ENCODE measurements at regions of chr1 and their contacts with region 1.

Region 1: GRCh38 chr1:75991497-75992114 is 59.4 kb upstream of the ASB17 start:
- DNase-seq: peak; percentile 13 to 87
- H3K4me3 ChIP-seq: no peak overlapping the region
- H3K27ac ChIP-seq: no peak overlapping the region
- H3K4me1 ChIP-seq: no peaks in the 10 kb centered on the region; a peak in 1 of 7 replicates
- H3K27me3 ChIP-seq: no peaks in the 10 kb centered on the region
- CTCF ChIP-seq: peak; percentile 42 to 87 (median 77)
- EP300 ChIP-seq: no peak
- POLR2A ChIP-seq: no peak
- RAD21 ChIP-seq: peak; percentile 90 to 91

Region 2: DNA sequence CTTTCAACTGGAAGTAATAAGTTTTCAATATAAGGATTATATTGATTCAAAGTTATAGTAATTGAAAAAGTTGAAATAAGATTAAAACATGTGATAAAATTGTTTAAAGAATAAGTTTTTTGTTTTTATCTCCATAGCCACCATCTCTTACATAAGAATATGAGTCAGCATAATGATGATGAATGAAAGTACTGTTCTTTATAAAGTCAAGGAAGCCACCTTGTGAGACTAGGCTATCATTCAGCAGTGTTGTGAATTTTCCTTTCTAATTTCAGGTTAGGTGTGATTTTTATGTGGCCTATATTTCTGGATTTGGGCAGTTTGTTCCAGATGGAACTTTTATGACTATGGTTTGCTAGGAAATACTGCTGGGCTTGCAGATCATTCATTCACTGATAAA is 37.0 kb before region 1 on chr1:
- CTCF ChIA-PET with region 1: no interaction called
- POLR2A ChIA-PET with region 1: no interaction called
- DNase-seq: no peak
- H3K4me3 ChIP-seq: no peak overlapping the region
- H3K27ac ChIP-seq: no peak overlapping the region
- H3K4me1 ChIP-seq: no peaks in the 10 kb centered on the region
- H3K27me3 ChIP-seq: no peaks in the 10 kb centered on the region
- CTCF ChIP-seq: no peak
- EP300 ChIP-seq: no peak
- POLR2A ChIP-seq: no peak
- RAD21 ChIP-seq: no peak

Region 3: GRCh38 chr1:75980972-75981897 is 10.4 kb before region 1 on chr1:
- CTCF ChIA-PET with region 1: interaction called, 24 read pairs
- POLR2A ChIA-PET with region 1: no interaction called
- DNase-seq: no peak
- H3K4me3 ChIP-seq: no peak overlapping the region
- H3K27ac ChIP-seq: no peak overlapping the region
- H3K4me1 ChIP-seq: no peaks in the 10 kb centered on the region
- H3K27me3 ChIP-seq: no peaks in the 10 kb centered on the region
- CTCF ChIP-seq: no peak
- EP300 ChIP-seq: no peak
- POLR2A ChIP-seq: no peak
- RAD21 ChIP-seq: no peak

Region 4: GRCh38 chr1:76115171-76115570 is 123.6 kb after region 1 on chr1:
- CTCF ChIA-PET with region 1: interaction called, 11 read pairs
- POLR2A ChIA-PET with region 1: no interaction called
- DNase-seq: peak in 1 of 2 experiments; percentile 1
- H3K4me3 ChIP-seq: no peak overlapping the region
- H3K27ac ChIP-seq: no peak overlapping the region
- H3K4me1 ChIP-seq: no peaks in the 10 kb centered on the region
- H3K27me3 ChIP-seq: no peaks in the 10 kb centered on the region
- CTCF ChIP-seq: no peak
- EP300 ChIP-seq: no peak
- POLR2A ChIP-seq: no peak
- RAD21 ChIP-seq: no peak

Measured in H1 (cell line).